ENCODE measurements at regions of chr7 and their contacts with region 1.

Region 1: GRCh38 chr7:12211054-12211710 is at the start of gene TMEM106B:
- DNase-seq: peak; percentile 95
- H3K4me3 ChIP-seq: peak within 1 kb of the TSS; percentile 74 to 78
- H3K27ac ChIP-seq: peak within 1 kb of the TSS; percentile 94 to 97
- H3K4me1 ChIP-seq: no peaks in the 10 kb centered on the region
- H3K27me3 ChIP-seq: no peaks in the 10 kb centered on the region
- CTCF ChIP-seq: peak in 2 of 4 experiments; percentile 14
- POLR2A ChIP-seq: peak; percentile 77
- total RNA-seq, gene TMEM106B: 58.5 to 75.5 TPM

Region 2: DNA sequence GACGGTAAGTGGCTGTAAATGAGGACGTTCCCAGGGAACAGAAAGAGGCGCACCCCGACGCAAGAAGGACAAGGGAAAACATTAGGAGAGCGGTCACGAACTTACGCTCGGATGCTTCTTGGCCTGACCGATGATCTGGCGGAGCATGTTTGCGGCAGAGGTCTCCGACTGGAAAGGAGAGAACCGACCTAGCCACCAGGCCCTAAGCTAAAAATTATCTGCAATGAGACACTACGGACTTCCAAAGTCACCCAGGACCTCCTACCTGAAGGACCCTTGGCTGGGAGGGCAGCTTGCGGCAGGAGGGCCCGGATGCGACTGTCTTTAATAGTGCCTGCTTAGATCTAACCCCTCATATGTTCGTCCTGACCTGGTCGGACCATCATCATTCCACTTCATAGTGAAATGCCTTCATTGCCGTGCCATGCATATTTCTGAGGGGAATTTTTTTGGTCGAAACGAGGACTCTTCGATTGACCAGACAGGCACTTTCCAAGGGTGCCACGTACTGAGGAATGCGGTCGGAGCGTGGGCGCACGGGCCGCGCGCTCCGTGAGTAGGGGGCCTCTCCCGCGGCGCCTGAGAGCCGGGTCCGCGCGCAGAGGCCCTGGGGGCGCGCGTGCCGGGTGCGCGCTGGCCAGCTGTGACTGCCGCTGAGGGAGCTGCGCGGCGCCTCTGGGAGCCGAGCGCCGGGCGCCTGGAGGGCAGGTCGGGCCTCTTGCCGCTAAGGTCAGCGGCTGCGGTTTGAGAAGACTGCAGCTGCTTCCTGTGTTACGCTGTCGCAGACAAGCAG is 1271.1 kb before region 1 on chr7:
- intact Hi-C with region 1: loop called (anchors 10 kb)
- DNase-seq: peak; percentile 86
- H3K4me3 ChIP-seq: peak overlapping the region; percentile 52 to 83
- H3K27ac ChIP-seq: peak overlapping the region; percentile 94 to 95
- H3K4me1 ChIP-seq: no peaks in the 10 kb centered on the region
- H3K27me3 ChIP-seq: no peaks in the 10 kb centered on the region
- CTCF ChIP-seq: no peak
- POLR2A ChIP-seq: peak; percentile 65

Region 3: DNA sequence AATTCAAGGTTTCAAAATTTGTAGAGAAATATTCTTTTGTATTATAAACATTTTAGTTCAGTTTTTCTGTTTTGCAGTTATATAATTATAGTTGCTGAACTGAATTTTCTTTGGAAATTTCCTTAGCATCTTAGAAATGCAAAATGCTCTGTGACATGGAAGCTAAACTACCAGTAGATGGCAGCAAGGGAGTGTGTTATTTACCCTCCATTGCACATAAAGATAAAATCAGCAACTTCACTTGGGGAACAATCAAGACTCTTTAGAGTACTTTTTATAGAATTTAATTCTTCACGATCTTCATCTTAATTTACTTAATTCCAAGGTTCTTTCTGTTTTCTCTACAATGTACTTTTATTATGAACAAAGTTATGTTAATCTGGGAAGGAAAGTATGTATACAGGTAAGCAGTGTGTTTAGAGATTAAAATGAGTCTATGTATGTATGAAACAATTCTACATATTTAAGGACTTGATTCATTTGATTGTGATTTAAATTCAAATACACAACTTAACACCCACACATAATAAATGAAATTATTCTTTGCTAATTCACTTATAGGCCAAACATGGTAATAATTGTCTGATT is 783.4 kb before region 1 on chr7:
- intact Hi-C with region 1: loop called (anchors 10 kb)
- DNase-seq: peak; percentile 24
- H3K4me3 ChIP-seq: no peak overlapping the region
- H3K27ac ChIP-seq: no peak overlapping the region
- H3K4me1 ChIP-seq: no peaks in the 10 kb centered on the region
- H3K27me3 ChIP-seq: no peaks in the 10 kb centered on the region
- CTCF ChIP-seq: peak in 3 of 4 experiments; percentile 59 to 82 (median 77)
- POLR2A ChIP-seq: no peak

Region 4: GRCh38 chr7:11831736-11832495 is 379.3 kb before region 1 on chr7 and contains the start of gene THSD7A:
- intact Hi-C with region 1: loop called (anchors 10 kb)
- DNase-seq: no peak
- H3K4me3 ChIP-seq: peak within 1 kb of the TSS; percentile 37 to 41
- H3K27ac ChIP-seq: peak within 1 kb of the TSS; percentile 60 to 62
- H3K4me1 ChIP-seq: no peaks in the 10 kb centered on the region
- H3K27me3 ChIP-seq: no peaks in the 10 kb centered on the region
- CTCF ChIP-seq: peak in 1 of 4 experiments; percentile 17
- POLR2A ChIP-seq: no peak
- total RNA-seq, gene THSD7A: 3.1 to 9.9 TPM

Region 5: DNA sequence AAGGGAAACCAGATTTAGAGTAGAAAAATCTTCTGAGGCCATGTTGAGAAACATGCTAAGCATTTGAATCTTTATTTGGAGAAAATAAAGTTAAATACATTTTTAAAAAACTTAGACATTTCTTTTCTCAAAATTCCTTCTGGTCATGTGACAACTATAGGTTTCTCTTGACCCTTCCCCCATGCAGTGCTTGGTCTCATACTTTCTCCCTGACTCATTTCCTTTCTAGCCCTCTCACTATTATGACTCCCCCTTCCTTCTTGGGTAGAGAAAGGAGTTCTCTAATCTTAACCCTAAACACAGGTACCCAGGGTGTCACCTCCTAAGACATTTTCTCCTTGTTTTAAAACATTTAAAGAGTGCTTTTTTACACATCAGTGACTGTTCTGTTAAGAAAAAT is 179.5 kb before region 1 on chr7:
- intact Hi-C with region 1: no loop called
- DNase-seq: no peak
- H3K4me3 ChIP-seq: no peak overlapping the region
- H3K27ac ChIP-seq: no peak overlapping the region
- H3K4me1 ChIP-seq: no peaks in the 10 kb centered on the region
- H3K27me3 ChIP-seq: no peaks in the 10 kb centered on the region
- CTCF ChIP-seq: no peak
- POLR2A ChIP-seq: no peak

Region 6: DNA sequence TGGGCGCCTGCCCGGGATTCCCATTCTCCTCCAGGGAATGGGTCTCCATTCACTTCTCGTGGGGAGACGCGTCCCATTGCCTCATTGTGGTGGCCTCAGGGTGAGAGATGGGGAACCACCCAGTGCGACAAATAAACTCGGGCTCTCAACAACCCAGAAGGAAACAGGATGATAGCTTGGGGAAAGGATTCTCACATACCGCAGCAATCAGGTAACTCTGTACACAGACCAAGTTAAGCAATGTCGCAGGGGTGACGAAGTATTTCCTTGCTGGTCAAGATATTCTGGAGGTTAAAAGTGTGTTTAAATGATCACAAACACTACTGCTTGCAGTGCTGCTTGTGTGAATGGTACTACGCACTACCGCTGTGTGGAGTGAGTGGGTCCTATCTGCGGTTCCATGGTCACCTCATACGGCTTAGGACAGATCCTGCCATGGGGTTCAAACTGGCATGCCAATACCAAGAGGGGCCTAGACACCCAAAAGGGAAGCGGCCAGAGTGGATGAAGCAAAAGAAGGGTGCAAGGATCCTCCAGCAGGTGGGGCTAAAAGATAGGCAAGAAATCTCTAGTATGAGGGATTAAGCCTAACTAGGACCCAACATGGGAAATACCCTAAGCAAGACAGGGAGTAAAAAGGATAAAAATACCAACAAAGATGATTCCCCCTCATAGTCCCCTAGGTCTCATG is 143.9 kb before region 1 on chr7:
- intact Hi-C with region 1: loop called (anchors 5 kb)
- DNase-seq: peak; percentile 60
- H3K4me3 ChIP-seq: no peak overlapping the region
- H3K27ac ChIP-seq: no peak overlapping the region
- H3K4me1 ChIP-seq: no peaks in the 10 kb centered on the region
- H3K27me3 ChIP-seq: no peaks in the 10 kb centered on the region
- CTCF ChIP-seq: peak; percentile 22 to 80 (median 67)
- POLR2A ChIP-seq: no peak

Region 7: GRCh38 chr7:12090757-12091221 is 120.4 kb before region 1 on chr7:
- intact Hi-C with region 1: no loop called
- DNase-seq: no peak
- H3K4me3 ChIP-seq: no peak overlapping the region
- H3K27ac ChIP-seq: no peak overlapping the region
- H3K4me1 ChIP-seq: no peaks in the 10 kb centered on the region
- H3K27me3 ChIP-seq: no peaks in the 10 kb centered on the region
- CTCF ChIP-seq: no peak
- POLR2A ChIP-seq: no peak

Region 8: DNA sequence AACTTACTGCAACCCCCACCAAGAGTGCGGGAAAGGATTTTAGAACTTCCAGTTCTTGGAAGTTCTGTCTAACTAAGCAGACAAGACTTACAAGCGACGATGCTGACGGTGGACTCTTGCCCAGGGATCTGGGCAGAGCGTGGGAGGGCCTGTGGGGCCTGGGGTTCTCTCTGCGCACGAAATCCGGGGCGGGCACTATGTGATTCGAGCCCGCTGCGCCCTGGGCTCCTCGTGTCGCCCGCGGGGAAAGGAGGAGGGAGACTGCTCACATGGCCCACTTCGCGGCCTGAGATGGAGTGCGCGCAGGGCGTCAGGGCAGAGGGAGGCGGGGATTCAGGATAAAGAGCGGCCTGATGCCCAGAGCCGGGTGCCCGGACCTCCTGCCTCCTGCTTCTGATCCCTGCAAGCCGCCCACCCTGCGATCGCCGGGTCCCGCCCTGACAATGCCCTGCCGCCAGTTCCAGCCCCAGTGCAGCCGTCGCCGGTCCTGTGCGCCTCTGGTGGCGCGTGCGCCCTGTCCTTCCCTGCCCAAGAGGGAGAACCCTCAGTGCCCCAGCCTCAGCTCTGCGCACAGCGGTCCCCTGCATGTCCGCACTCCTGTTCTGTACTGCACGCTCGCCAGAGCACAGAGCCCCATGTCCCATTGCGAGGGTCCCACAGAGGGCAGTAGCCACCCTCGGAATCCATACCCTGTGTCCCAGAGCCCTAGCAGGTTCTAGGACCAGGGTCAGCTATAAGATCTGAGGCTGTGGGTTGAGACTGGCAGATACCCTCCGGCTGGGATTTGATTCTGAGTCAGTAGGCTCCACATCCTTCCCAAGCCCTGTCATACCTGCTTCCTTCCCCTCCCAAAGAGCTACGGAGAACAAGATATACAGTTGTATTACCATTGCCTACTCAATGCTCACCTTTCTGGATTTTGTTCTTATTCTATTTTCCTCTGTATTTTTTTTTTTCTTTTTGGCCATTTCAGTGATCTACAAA is 99.5 kb before region 1 on chr7:
- intact Hi-C with region 1: loop called (anchors 2 kb)
- DNase-seq: peak; percentile 8
- H3K4me3 ChIP-seq: peak overlapping the region; percentile 12 to 22
- H3K27ac ChIP-seq: peak overlapping the region; percentile 23 to 36
- H3K4me1 ChIP-seq: no peaks in the 10 kb centered on the region
- H3K27me3 ChIP-seq: peaks cover 2% of the 10 kb centered on the region
- CTCF ChIP-seq: no peak
- POLR2A ChIP-seq: no peak